Panc1 (cell line): ENCODE measurements at regions of chr12 and their contacts with region 1.

Region 1: DNA sequence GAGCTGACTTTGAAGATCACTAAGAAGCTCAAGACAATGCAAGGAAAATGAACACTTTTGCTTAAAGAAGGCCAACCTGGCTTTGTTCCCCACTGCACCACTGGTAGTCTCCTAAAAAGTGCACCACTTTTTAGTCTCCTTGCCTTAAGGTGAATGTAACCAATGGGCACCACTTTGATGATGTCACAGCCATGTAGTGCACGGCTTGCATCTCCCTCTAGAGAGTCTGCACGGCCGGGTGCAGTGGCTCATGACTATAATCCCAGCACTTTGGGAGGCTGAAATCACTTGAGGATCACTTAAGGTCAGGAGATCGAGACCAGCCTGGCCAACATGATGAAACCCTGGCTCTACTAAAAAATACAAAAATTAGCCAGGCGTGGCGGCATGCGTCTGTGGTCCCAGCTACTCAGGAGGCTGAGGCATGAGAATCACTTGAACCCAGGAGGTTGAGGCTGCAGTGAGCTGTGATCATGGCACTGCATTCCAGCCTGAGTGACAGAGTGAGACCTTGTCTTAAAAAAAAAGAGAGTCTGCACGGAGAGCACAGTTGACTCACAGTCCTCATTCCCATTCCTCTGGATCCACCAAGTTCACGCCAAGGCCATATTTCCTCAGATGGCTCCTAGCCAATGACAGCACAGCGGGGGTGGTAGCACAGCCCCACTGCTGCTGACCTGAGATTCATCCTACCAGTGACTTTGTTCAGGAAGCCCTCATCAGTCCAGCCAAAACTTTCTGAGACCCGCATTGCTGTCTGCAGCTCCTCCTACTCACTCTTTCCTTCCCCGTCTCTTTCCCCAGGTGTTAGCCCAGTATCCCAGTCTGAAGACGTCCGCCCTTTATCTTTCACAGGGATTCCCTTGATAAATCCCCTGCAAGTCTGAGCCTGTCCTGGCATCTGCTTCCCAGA is 16.5 kb upstream of the IFT81 start:
- DNase-seq: no peak
- ATAC-seq: no peak
- H3K4me3 ChIP-seq: no peak overlapping the region
- H3K27ac ChIP-seq: no peak overlapping the region
- H3K4me1 ChIP-seq: peaks cover 3% of the 10 kb centered on the region; the same call in 1 of the 2 replicates
- H3K27me3 ChIP-seq: no peaks in the 10 kb centered on the region
- CTCF ChIP-seq: no peak

Region 2: GRCh38 chr12:110023059-110023606 is 84.5 kb before region 1 on chr12:
- CTCF ChIA-PET with region 1: no interaction called
- POLR2A ChIA-PET with region 1: interaction called, 12 read pairs
- in situ Hi-C with region 1: no loop called
- intact Hi-C with region 1: no loop called
- DNase-seq: no peak
- ATAC-seq: no peak
- H3K4me3 ChIP-seq: no peak overlapping the region
- H3K27ac ChIP-seq: no peak overlapping the region
- H3K4me1 ChIP-seq: peaks cover 7% of the 10 kb centered on the region
- H3K27me3 ChIP-seq: no peaks in the 10 kb centered on the region
- CTCF ChIP-seq: no peak

Region 3: GRCh38 chr12:110093631-110094311 is 13.9 kb before region 1 on chr12:
- CTCF ChIA-PET with region 1: no interaction called
- POLR2A ChIA-PET with region 1: no interaction called
- in situ Hi-C with region 1: no loop called
- intact Hi-C with region 1: no loop called
- DNase-seq: no peak
- ATAC-seq: no peak
- H3K4me3 ChIP-seq: no peak overlapping the region
- H3K27ac ChIP-seq: no peak overlapping the region
- H3K4me1 ChIP-seq: no peaks in the 10 kb centered on the region
- H3K27me3 ChIP-seq: no peaks in the 10 kb centered on the region
- CTCF ChIP-seq: no peak